HepG2 (cell line): ENCODE measurements at regions of chr7 and their contacts with region 1.

Region 1: GRCh38 chr7:122750389-122750788 is 47.7 kb upstream of the RNF148 start:
- DNase-seq: no peak
- ATAC-seq: no peak
- H3K4me3 ChIP-seq: no peak overlapping the region
- H3K27ac ChIP-seq: no peak overlapping the region
- H3K4me1 ChIP-seq: peaks cover 41% of the 10 kb centered on the region
- H3K27me3 ChIP-seq: no peaks in the 10 kb centered on the region
- CTCF ChIP-seq: no peak
- EP300 ChIP-seq: no peak
- POLR2A ChIP-seq: no peak
- RAD21 ChIP-seq: no peak

Region 2: DNA sequence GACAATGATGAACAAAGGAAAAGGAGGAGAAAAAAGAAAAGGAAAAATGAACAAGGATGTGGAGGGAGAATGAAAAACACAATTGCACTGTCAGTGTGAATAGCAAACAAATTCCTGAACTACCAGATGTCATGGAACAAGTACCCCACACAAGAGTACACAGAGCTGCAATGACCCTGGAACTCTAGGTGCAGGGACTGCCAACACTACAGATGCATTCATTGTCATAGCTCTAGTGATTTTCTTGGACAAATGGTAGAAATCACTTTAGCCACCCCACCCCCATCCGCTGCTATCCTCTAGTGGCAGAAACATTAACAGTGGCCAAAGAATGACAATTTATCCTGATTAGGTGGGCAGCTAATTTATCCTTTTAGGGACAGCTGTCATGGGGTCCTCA is 54.6 kb before region 1 on chr7:
- CTCF ChIA-PET with region 1: no interaction called
- POLR2A ChIA-PET with region 1: interaction called, 3 read pairs
- in situ Hi-C with region 1: no loop called
- intact Hi-C with region 1: loop called (anchors 2 kb)
- DNase-seq: peak; percentile 91
- ATAC-seq: peak; percentile 99
- H3K4me3 ChIP-seq: no peak overlapping the region
- H3K27ac ChIP-seq: peak overlapping the region; percentile 75
- H3K4me1 ChIP-seq: peaks cover 34% of the 10 kb centered on the region
- H3K27me3 ChIP-seq: no peaks in the 10 kb centered on the region
- CTCF ChIP-seq: peak; percentile 44
- EP300 ChIP-seq: peak in 1 of 2 experiments; percentile 49; a peak in 2 of 4 replicates
- POLR2A ChIP-seq: no peak
- RAD21 ChIP-seq: 0 out of 2 replicates have a peak, but pooled peaks have one; percentile 21

Region 3: GRCh38 chr7:122833888-122834570 is 83.6 kb after region 1 on chr7:
- CTCF ChIA-PET with region 1: no interaction called
- POLR2A ChIA-PET with region 1: no interaction called
- in situ Hi-C with region 1: no loop called
- intact Hi-C with region 1: no loop called
- DNase-seq: no peak
- ATAC-seq: peak; percentile 72
- H3K4me3 ChIP-seq: peak overlapping the region; percentile 29 to 52 (median 33); a peak in 5 of 6 replicates
- H3K27ac ChIP-seq: peak overlapping the region; percentile 22
- H3K4me1 ChIP-seq: peaks cover 15% of the 10 kb centered on the region
- H3K27me3 ChIP-seq: no peaks in the 10 kb centered on the region
- CTCF ChIP-seq: no peak
- EP300 ChIP-seq: no peak
- POLR2A ChIP-seq: no peak
- RAD21 ChIP-seq: no peak